Vagina (tissue), 2 donors: ENCODE measurements at regions of chr22 and their contacts with region 1.

Region 1: DNA sequence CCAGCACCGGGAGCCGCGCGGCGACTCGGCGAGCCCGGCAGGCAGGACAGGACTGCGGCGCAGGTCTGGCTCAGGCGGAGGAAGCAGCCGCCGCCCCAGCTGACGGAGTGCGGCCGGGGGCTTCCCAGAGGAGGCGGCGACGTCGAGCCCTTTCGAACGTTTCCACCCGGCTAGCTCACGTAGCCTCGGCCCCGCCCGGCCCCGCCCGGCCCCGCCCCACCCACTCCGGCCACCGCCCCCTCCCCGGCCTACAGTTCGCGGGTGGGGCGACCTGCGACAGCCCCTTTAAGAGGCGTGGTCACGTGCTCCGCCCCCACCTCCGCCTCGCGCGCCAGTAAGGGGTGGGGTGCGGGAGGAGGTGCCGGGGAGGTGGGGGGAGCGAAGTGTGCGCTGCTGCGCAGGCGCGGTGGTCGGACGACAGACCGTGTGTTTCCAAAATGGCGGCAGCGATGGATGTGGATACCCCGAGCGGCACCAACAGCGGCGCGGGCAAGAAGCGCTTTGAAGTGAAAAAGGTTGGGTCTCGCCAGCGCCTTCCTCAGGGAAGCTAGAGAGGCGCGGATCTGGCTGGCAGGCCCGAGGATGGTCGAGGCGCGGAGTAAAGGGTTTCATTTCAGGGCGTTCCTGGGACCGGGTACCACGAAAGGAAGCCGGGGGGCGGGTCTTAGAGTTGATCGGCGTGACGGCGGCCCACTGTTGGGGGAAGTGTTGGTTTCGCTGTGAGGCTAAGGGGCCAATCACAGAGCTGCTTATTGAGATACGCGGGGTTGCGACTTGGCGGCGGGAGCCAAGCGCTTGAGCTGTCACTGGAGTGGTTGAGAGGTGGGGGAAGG is at the start of gene RBX1:
- DNase-seq: peak; percentile 99
- H3K4me3 ChIP-seq: peak within 1 kb of the TSS; percentile 65 to 85
- H3K27ac ChIP-seq: peak within 1 kb of the TSS; percentile 96
- H3K4me1 ChIP-seq: peaks cover 22% of the 10 kb centered on the region
- H3K27me3 ChIP-seq: no peaks in the 10 kb centered on the region
- CTCF ChIP-seq: no peak
- POLR2A ChIP-seq: peak in 1 of 2 donors; percentile 89
- total RNA-seq, gene RBX1: 54.8 TPM

Region 2: GRCh38 chr22:41022470-41023298 is 71.5 kb after region 1 on chr22:
- intact Hi-C with region 1: loop called (anchors 1 kb)
- DNase-seq: peak in 1 of 2 donors; percentile 93
- H3K4me3 ChIP-seq: peak overlapping the region; percentile 66 to 82
- H3K27ac ChIP-seq: peak overlapping the region; percentile 98
- H3K4me1 ChIP-seq: peaks cover 13% of the 10 kb centered on the region
- H3K27me3 ChIP-seq: no peaks in the 10 kb centered on the region
- CTCF ChIP-seq: no peak
- POLR2A ChIP-seq: peak in 1 of 2 donors; percentile 76